Breast epithelium (tissue), 4 donors: ENCODE measurements at regions of chr2 and their contacts with region 1.

Region 1: DNA sequence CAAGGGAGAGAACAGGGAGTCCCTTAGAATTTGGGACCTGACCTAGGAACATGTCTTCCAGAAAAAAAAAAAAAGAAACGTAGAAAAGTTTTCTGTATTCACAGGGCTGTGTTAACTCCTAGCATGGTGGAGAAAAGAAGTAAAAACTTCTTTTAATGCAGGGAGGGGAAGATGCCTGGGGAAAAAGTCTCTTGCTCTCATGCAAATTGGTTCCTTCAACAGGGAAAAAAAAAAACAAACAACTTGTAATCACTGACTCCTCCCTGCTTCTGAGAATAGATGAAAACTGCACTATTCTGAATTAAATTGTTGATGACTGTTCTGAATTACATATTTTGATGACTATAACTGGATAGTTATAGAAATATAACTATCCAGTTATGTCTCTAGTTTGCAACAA is 933.2 kb downstream of the TRIB2 start:
- DNase-seq: no peak
- H3K4me3 ChIP-seq: no peak overlapping the region
- H3K27ac ChIP-seq: no peak overlapping the region
- H3K4me1 ChIP-seq: no peaks in the 10 kb centered on the region
- H3K27me3 ChIP-seq: no peaks in the 10 kb centered on the region
- CTCF ChIP-seq: no peak
- POLR2A ChIP-seq: no peak

Region 2: GRCh38 chr2:12702305-12703121 is 947.4 kb before region 1 on chr2:
- intact Hi-C with region 1: no loop called
- DNase-seq: peak in 1 of 2 donors; percentile 43
- H3K4me3 ChIP-seq: no peak overlapping the region
- H3K27ac ChIP-seq: peak overlapping the region; percentile 85 to 87
- H3K4me1 ChIP-seq: peaks cover 0 to 19% of the 10 kb centered on the region in 2 donors
- H3K27me3 ChIP-seq: no peaks in the 10 kb centered on the region
- CTCF ChIP-seq: no peak
- POLR2A ChIP-seq: no peak

Region 3: GRCh38 chr2:13638181-13638580 is 11.7 kb before region 1 on chr2:
- intact Hi-C with region 1: no loop called
- DNase-seq: no peak
- H3K4me3 ChIP-seq: no peak overlapping the region
- H3K27ac ChIP-seq: no peak overlapping the region
- H3K4me1 ChIP-seq: no peaks in the 10 kb centered on the region
- H3K27me3 ChIP-seq: no peaks in the 10 kb centered on the region
- CTCF ChIP-seq: no peak
- POLR2A ChIP-seq: no peak

Region 4: GRCh38 chr2:13666582-13667414 is 16.9 kb after region 1 on chr2:
- intact Hi-C with region 1: no loop called
- DNase-seq: no peak
- H3K4me3 ChIP-seq: no peak overlapping the region
- H3K27ac ChIP-seq: no peak overlapping the region
- H3K4me1 ChIP-seq: no peaks in the 10 kb centered on the region
- H3K27me3 ChIP-seq: no peaks in the 10 kb centered on the region
- CTCF ChIP-seq: no peak
- POLR2A ChIP-seq: no peak

Region 5: DNA sequence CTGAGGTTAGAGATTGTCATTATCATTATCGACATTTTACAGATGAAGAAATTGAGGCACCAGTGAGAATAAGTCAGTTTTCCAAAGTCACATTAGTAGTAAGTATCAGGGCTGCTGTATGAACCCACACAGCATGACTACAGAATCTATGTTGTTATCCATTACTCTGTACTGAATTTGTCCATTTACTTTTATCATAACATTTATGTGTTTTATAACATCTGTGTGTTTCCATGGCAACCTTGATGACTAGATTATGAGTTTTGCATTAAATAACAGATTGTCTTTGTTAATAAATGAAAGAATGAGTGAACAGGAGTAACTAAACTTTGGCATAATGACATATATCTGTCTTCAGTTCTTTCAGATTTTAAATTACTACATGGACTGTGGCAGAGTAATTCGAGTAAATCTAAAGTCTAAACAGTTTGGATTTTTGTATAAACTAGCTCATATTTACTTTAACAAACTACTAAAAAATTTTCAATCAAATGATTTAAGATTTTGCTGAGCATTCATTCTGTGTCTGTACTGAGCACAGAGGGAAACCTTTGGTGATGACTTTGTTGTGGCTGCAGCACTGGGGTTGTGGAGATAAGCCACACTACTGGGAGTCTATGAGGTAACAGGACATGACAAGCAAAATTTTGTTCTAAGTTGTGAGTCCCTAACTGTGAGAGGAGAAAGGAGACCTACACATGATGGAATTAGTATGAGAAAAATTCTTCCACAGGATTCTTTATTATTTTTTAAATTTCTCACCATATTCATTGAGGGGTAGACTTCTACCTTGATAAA is 48.7 kb after region 1 on chr2:
- intact Hi-C with region 1: no loop called
- DNase-seq: no peak
- H3K4me3 ChIP-seq: no peak overlapping the region
- H3K27ac ChIP-seq: no peak overlapping the region
- H3K4me1 ChIP-seq: no peaks in the 10 kb centered on the region
- H3K27me3 ChIP-seq: no peaks in the 10 kb centered on the region
- CTCF ChIP-seq: no peak
- POLR2A ChIP-seq: no peak

Region 6: GRCh38 chr2:15383746-15384350 is 1733.9 kb after region 1 on chr2:
- intact Hi-C with region 1: loop called (anchors 10 kb)
- DNase-seq: no peak
- H3K4me3 ChIP-seq: no peak overlapping the region
- H3K27ac ChIP-seq: no peak overlapping the region
- H3K4me1 ChIP-seq: no peaks in the 10 kb centered on the region
- H3K27me3 ChIP-seq: no peaks in the 10 kb centered on the region
- CTCF ChIP-seq: no peak
- POLR2A ChIP-seq: no peak